ENCODE measurements at regions of chr6 and their contacts with region 1.

Region 1: GRCh38 chr6:32971581-32972352 is 3.4 kb downstream of the BRD2 start:
- DNase-seq: peak; percentile 100
- H3K4me3 Mint-ChIP-seq: peak overlapping the region; percentile 98
- H3K27ac Mint-ChIP-seq: peak overlapping the region; percentile 99
- H3K4me1 Mint-ChIP-seq: peaks cover 26% of the 10 kb centered on the region
- H3K27me3 Mint-ChIP-seq: no peaks in the 10 kb centered on the region

Region 2: GRCh38 chr6:31827286-31828079 is 1144.3 kb before region 1 on chr6 and contains the start of gene HSPA1B:
- CTCF ChIA-PET with region 1: no interaction called
- POLR2A ChIA-PET with region 1: no interaction called
- intact Hi-C with region 1: loop called (anchors 10 kb)
- DNase-seq: peak; percentile 98
- H3K4me3 Mint-ChIP-seq: peak within 1 kb of the TSS; percentile 86
- H3K27ac Mint-ChIP-seq: peak within 1 kb of the TSS; percentile 98
- H3K4me1 Mint-ChIP-seq: peaks cover 43% of the 10 kb centered on the region
- H3K27me3 Mint-ChIP-seq: no peaks in the 10 kb centered on the region
- total RNA-seq, gene HSPA1B: 59.5 to 62.3 TPM

Region 3: GRCh38 chr6:32838114-32838958 is 133.4 kb before region 1 on chr6 and contains the start of gene TAP2:
- CTCF ChIA-PET with region 1: interaction called, 20 read pairs
- POLR2A ChIA-PET with region 1: interaction called, 133 read pairs
- intact Hi-C with region 1: no loop called
- DNase-seq: peak; percentile 98
- H3K4me3 Mint-ChIP-seq: peak within 1 kb of the TSS; percentile 73
- H3K27ac Mint-ChIP-seq: peak within 1 kb of the TSS; percentile 91
- H3K4me1 Mint-ChIP-seq: peaks cover 76% of the 10 kb centered on the region
- H3K27me3 Mint-ChIP-seq: no peaks in the 10 kb centered on the region
- total RNA-seq, gene TAP2: 134 to 143 TPM

Region 4: GRCh38 chr6:32885698-32886286 is 86.0 kb before region 1 on chr6:
- CTCF ChIA-PET with region 1: interaction called, 12 read pairs
- POLR2A ChIA-PET with region 1: interaction called, 4 read pairs
- intact Hi-C with region 1: no loop called
- DNase-seq: no peak
- H3K4me3 Mint-ChIP-seq: no peak overlapping the region
- H3K27ac Mint-ChIP-seq: no peak overlapping the region
- H3K4me1 Mint-ChIP-seq: peaks cover 11% of the 10 kb centered on the region
- H3K27me3 Mint-ChIP-seq: no peaks in the 10 kb centered on the region

Region 5: GRCh38 chr6:32947552-32948465 is 24.0 kb before region 1 on chr6:
- CTCF ChIA-PET with region 1: interaction called, 250 read pairs
- POLR2A ChIA-PET with region 1: interaction called, 68 read pairs
- intact Hi-C with region 1: loop called (anchors 1 kb)
- DNase-seq: peak; percentile 63
- H3K4me3 Mint-ChIP-seq: no peak overlapping the region
- H3K27ac Mint-ChIP-seq: no peak overlapping the region
- H3K4me1 Mint-ChIP-seq: peaks cover 50% of the 10 kb centered on the region
- H3K27me3 Mint-ChIP-seq: no peaks in the 10 kb centered on the region

Region 6: GRCh38 chr6:33248925-33249731 is 277.4 kb after region 1 on chr6:
- CTCF ChIA-PET with region 1: no interaction called
- POLR2A ChIA-PET with region 1: interaction called, 13 read pairs
- intact Hi-C with region 1: no loop called
- DNase-seq: peak; percentile 99
- H3K4me3 Mint-ChIP-seq: peak overlapping the region; percentile 88
- H3K27ac Mint-ChIP-seq: peak overlapping the region; percentile 90
- H3K4me1 Mint-ChIP-seq: peaks cover 43% of the 10 kb centered on the region
- H3K27me3 Mint-ChIP-seq: peaks cover 3% of the 10 kb centered on the region

Region 7: GRCh38 chr6:33323623-33323948 is 351.8 kb after region 1 on chr6:
- CTCF ChIA-PET with region 1: no interaction called
- POLR2A ChIA-PET with region 1: no interaction called
- intact Hi-C with region 1: no loop called
- DNase-seq: no peak
- H3K4me3 Mint-ChIP-seq: peak overlapping the region; percentile 89
- H3K27ac Mint-ChIP-seq: peak overlapping the region; percentile 98
- H3K4me1 Mint-ChIP-seq: peaks cover 47% of the 10 kb centered on the region
- H3K27me3 Mint-ChIP-seq: no peaks in the 10 kb centered on the region

Region 8: DNA sequence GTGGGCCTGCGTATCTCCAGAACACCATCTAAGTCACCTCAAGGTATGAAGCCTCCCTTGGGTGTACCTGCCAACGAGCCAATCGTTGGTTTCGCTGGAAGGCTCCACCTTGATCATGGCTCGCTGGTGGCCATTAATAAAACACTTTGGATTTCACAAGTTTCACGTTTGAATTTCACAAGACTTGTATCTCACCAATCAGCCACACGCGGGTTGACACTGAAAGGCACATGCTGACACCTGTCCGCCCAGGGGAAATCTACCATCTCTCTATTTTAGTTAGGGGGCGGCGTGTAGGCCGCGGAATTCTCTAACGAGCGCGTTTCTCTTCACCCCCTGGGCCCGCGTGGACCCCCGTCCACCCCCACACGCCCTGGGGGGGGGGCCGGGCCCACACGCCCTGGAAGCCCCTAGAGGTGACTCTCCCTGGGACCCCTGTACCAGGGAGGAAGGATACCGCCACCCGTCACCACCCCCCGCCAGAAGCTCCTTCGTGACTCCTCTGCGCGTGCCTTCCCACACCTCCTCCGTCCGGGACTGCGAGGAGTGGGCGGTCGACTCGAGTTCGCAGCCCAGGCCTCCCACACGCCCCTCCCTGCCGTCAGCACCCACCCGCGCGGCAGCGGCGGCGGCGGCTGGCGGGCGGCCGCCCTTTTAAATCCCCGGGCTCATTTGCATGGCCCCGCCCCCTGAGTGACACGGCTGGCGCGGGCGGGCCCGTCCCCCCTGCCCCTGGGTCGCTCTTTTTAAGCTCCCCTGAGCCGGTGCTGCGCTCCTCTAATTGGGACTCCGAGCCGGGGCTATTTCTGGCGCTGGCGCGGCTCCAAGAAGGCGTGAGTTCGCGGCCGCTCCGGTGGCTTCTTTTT is 1264.6 kb after region 1 on chr6 and contains the start of gene HMGA1:
- CTCF ChIA-PET with region 1: no interaction called
- POLR2A ChIA-PET with region 1: no interaction called
- intact Hi-C with region 1: loop called (anchors 5 kb)
- DNase-seq: peak; percentile 91
- H3K4me3 Mint-ChIP-seq: peak within 1 kb of the TSS; percentile 88
- H3K27ac Mint-ChIP-seq: peak within 1 kb of the TSS; percentile 93
- H3K4me1 Mint-ChIP-seq: peaks cover 41% of the 10 kb centered on the region
- H3K27me3 Mint-ChIP-seq: no peaks in the 10 kb centered on the region
- total RNA-seq, gene HMGA1: 422 to 429 TPM